Right ventricle myocardium inferior (tissue), 1 donor: ENCODE measurements at regions of chr7 and their contacts with region 1.

Region 1: DNA sequence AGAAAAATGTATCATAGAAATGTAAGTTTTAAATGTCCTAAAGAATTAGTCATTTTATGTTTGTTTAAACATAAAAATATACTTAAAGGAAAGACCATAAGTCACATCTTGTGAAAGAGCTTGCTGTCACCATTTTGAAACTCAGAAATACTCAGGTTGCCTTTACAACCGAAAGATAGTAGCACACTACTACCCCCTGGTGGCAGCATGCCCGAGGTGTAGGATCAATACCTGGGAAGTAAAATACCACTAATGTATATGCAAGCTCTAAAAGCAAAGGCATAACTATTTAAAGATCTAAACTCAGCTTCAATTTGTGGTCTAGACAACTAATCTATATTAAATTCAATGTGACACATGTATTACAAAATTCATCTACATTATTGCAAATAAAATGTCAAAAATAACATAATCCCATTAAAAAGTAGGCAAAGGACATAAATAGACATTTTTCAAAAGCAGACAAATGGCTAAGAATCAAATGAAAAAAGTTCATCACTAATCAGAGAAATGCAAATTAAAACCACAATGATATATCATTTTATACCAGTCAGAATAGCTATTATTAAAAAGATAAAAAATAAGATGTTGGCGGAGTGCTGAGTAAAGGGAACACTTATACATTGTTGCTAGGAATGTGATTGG is 47.7 kb upstream of the FGL2 start:
- DNase-seq: peak; percentile 82
- ATAC-seq: no peak

Region 2: GRCh38 chr7:77331938-77332695 is 84.8 kb after region 1 on chr7:
- intact Hi-C with region 1: loop called (anchors 1 kb)
- DNase-seq: peak; percentile 67
- ATAC-seq: peak; percentile 88